ENCODE measurements at regions of chr9 and their contacts with region 1.

Region 1: GRCh38 chr9:93589691-93590090 is 13.3 kb downstream of the PHF2 start:
- DNase-seq: no peak
- H3K4me3 ChIP-seq: no peak overlapping the region
- H3K27ac ChIP-seq: no peak overlapping the region
- H3K4me1 ChIP-seq: peaks cover 97% of the 10 kb centered on the region
- H3K27me3 ChIP-seq: no peaks in the 10 kb centered on the region
- CTCF ChIP-seq: no peak

Region 2: DNA sequence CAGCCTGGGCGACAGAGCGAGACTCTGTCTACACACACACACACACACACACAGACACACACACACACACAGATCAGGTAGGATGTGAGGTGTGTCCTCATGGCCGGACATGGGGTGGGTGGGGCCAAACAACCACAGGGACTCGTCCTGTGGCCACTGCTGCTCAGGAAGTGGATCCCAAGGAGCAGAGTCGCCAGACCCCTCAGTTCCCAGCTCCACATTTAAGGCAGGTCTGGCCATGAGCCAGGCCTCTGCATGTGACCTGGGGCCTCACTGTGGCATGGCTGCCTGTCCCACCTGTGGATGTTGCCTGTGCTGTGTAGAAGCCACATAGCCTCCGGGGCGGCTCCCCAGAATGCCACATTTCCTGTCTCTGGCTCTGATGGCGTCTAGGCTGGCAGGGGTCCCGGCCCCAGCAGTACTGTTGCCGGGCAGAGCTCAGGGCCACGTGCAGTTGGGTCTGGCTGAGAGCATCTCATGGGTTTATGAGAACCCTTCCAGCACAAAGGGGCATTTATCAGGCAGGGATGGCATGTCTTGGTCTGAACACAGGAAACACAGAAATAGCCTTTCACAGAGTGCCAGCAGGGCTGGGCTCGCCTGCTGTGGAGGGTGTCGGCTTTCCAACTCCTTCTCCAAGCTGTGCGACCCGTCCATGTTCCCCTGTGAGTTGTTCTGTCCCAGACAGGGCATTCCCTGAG is 445.7 kb before region 1 on chr9:
- intact Hi-C with region 1: loop called (anchors 5 kb)
- DNase-seq: no peak
- H3K4me3 ChIP-seq: no peak overlapping the region
- H3K27ac ChIP-seq: peak overlapping the region; percentile 16
- H3K4me1 ChIP-seq: peaks cover 10% of the 10 kb centered on the region
- H3K27me3 ChIP-seq: no peaks in the 10 kb centered on the region
- CTCF ChIP-seq: no peak

Measured in left ventricle myocardium inferior (tissue), 1 donor.